ENCODE measurements at regions of chr1 and their contacts with region 1.

Region 1: GRCh38 chr1:54987919-54988705 is 7.7 kb downstream of the TMEM61 start:
- DNase-seq: peak; percentile 66
- H3K4me3 ChIP-seq: no peak overlapping the region
- CTCF ChIP-seq: no peak

Region 2: GRCh38 chr1:54973205-54973921 is 14.7 kb before region 1 on chr1:
- CTCF ChIA-PET with region 1: interaction called, 24 read pairs
- POLR2A ChIA-PET with region 1: no interaction called
- DNase-seq: no peak
- H3K4me3 ChIP-seq: no peak overlapping the region
- CTCF ChIP-seq: peak; percentile 53

Measured in AG04449 (cell line).